Activated CD4-positive, alpha-beta memory T cell treated with anti-CD3 and anti-CD28 coated beads, Interleukin-2, amount 10 ng/mL, durations not matched to agents 7 days and 5 days (primary cell): ENCODE measurements at regions of chr2 and their contacts with region 1.

Region 1: DNA sequence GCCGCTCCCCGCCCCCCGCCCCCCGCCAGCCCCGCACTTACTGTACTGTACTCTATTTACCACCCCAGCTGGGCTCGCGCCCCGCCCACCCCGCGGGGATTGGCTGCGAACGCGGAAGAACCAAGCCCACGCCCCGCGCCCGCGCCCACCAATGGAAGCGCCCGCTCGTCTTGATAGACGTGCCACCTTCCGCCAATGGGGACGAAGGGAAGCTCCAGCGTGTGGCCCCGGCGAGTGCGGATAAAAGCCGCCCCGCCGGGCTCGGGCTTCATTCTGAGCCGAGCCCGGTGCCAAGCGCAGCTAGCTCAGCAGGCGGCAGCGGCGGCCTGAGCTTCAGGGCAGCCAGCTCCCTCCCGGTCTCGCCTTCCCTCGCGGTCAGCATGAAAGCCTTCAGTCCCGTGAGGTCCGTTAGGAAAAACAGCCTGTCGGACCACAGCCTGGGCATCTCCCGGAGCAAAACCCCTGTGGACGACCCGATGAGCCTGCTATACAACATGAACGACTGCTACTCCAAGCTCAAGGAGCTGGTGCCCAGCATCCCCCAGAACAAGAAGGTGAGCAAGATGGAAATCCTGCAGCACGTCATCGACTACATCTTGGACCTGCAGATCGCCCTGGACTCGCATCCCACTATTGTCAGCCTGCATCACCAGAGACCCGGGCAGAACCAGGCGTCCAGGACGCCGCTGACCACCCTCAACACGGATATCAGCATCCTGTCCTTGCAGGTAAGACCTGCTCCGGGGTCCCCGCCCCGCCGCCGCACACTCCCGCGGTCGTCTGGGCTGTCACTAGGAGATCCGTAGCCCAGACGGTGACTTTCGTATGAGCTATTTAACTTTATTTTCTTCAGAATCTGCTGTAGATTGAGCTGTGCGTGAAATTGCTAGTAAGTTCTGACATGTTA is at the start of gene ID2:
- DNase-seq: peak; percentile 99
- H3K4me3 Mint-ChIP-seq: peak within 1 kb of the TSS; percentile 96
- H3K27ac Mint-ChIP-seq: peak within 1 kb of the TSS; percentile 94
- H3K4me1 Mint-ChIP-seq: peaks cover 32% of the 10 kb centered on the region
- H3K27me3 Mint-ChIP-seq: peaks cover 10% of the 10 kb centered on the region
- total RNA-seq, gene ID2: 299 to 324 TPM

Region 2: GRCh38 chr2:7427293-7428060 is 1254.6 kb before region 1 on chr2:
- CTCF ChIA-PET with region 1: interaction called, 12 read pairs
- POLR2A ChIA-PET with region 1: interaction called, 24 read pairs
- DNase-seq: no peak
- H3K4me3 Mint-ChIP-seq: peak overlapping the region; percentile 35
- H3K27ac Mint-ChIP-seq: peak overlapping the region; percentile 59
- H3K4me1 Mint-ChIP-seq: peaks cover 43% of the 10 kb centered on the region
- H3K27me3 Mint-ChIP-seq: peaks cover 5% of the 10 kb centered on the region

Region 3: DNA sequence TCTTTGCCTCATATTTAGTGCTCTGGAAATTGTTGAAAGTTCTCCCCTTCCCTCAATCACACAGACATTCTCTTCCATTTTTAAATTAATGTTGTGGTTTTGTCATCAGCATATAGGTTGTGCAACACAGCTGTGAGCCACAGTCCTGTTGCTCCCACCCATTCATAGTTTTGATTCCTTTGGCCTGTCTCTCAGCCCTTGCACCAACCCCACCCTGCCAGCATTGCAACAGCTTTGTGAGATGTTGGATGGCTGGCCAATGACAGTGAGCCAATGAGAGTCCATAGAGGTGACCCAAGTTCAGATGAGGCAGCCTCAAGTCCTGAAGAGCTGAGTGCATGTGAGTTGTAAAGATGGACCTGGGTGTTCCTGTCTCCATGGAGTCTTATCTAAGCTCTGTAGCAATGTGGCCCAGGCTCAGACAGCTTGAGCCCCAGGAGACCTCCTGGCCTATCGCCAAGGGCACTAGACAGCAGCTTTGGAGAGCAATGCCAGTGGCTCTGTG is 989.3 kb before region 1 on chr2:
- CTCF ChIA-PET with region 1: no interaction called
- POLR2A ChIA-PET with region 1: interaction called, 11 read pairs
- DNase-seq: no peak
- H3K4me3 Mint-ChIP-seq: peak overlapping the region; percentile 52
- H3K27ac Mint-ChIP-seq: peak overlapping the region; percentile 85
- H3K4me1 Mint-ChIP-seq: peaks cover 48% of the 10 kb centered on the region
- H3K27me3 Mint-ChIP-seq: no peaks in the 10 kb centered on the region

Region 4: DNA sequence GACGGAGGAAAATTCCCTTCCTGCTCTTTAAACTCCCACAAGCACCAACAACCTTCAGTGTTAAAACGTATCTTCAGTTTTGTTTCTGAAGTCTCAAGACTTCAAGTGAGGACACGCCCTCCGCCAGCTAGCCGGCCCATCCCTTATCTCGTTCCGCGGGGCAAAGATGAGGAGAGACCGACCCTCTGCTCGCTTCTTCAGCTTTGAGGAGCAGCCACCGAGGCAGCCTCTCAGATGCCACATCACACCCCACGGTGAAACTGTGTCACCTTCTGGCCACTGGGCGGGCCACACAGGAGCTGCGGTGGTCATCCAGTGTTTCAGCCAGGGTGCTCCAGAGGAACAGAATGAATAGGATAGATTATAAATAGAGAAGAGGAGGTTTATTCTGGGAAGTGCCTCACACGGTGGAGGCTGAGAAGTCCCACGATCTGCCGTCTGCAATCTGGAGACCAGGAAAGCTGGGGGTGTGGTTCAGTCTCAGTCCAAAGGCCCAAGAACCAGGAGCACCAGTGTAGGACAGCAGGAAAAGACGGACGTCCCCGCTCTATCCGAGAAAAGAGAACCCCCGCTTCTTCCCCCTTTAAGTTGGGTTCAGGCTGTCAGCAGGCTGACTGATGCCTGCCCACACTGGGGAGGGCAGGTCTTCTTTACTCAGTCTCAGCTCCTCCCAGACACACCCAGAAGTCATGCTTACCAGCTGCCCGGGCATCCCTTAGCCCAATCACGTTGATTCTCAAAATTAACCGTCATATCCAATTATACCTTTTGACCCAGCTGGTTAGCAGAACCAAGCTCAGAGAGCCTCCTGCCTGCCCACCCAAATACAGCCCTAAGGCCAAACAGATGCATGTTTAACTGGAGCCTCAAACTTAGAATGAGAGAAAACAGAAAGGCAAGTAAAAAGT is 399.8 kb before region 1 on chr2:
- CTCF ChIA-PET with region 1: no interaction called
- POLR2A ChIA-PET with region 1: interaction called, 14 read pairs
- DNase-seq: peak; percentile 45
- H3K4me3 Mint-ChIP-seq: peak overlapping the region; percentile 79
- H3K27ac Mint-ChIP-seq: peak overlapping the region; percentile 88
- H3K4me1 Mint-ChIP-seq: peaks cover 55% of the 10 kb centered on the region
- H3K27me3 Mint-ChIP-seq: no peaks in the 10 kb centered on the region

Region 5: GRCh38 chr2:8337321-8337720 is 344.7 kb before region 1 on chr2:
- CTCF ChIA-PET with region 1: no interaction called
- POLR2A ChIA-PET with region 1: interaction called, 21 read pairs
- DNase-seq: peak; percentile 48
- H3K4me3 Mint-ChIP-seq: peak overlapping the region; percentile 25
- H3K27ac Mint-ChIP-seq: peak overlapping the region; percentile 66
- H3K4me1 Mint-ChIP-seq: peaks cover 33% of the 10 kb centered on the region
- H3K27me3 Mint-ChIP-seq: peaks cover 5% of the 10 kb centered on the region

Region 6: DNA sequence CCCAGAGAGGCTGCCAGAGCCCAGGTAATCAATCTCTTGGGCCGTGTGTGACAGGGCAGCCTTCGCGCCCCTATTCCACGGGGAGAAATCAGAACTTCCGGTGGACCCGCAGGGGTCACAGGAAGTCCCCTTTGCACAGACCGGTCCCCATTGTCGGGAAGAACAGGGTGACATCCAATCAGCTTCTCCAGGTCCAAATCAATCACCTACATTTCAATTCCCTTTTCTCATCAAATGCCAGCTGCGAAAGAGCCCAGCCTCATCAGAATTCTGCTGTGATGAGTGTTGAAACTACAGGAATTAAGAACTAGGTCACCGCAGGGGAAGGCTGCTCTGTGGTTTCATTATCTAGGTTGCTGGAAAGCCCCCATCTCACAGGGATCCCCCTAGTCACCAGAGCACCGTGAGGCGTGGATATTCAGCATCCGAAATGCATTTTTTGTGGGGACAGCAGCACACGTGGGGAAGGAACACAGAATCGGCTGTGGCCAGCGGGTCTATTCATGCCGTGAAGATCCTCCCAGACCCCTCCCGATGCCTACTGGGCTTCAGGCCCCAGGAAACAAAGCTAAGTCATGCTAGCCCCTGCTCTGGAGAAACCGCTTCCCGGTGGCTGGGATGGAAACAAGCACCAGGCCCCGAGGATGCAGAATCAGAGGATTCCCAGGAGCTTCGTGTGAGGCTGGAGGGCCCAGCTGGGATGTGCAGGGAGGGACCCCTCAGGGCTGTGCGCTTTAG is 193.9 kb before region 1 on chr2:
- CTCF ChIA-PET with region 1: no interaction called
- POLR2A ChIA-PET with region 1: interaction called, 44 read pairs
- DNase-seq: peak; percentile 70
- H3K4me3 Mint-ChIP-seq: peak overlapping the region; percentile 81
- H3K27ac Mint-ChIP-seq: peak overlapping the region; percentile 84
- H3K4me1 Mint-ChIP-seq: peaks cover 78% of the 10 kb centered on the region
- H3K27me3 Mint-ChIP-seq: no peaks in the 10 kb centered on the region

Region 7: GRCh38 chr2:8544786-8545694 is 137.0 kb before region 1 on chr2:
- CTCF ChIA-PET with region 1: interaction called, 54 read pairs
- POLR2A ChIA-PET with region 1: interaction called, 230 read pairs
- DNase-seq: peak; percentile 93
- H3K4me3 Mint-ChIP-seq: peak overlapping the region; percentile 39
- H3K27ac Mint-ChIP-seq: peak overlapping the region; percentile 100
- H3K4me1 Mint-ChIP-seq: peaks cover 81% of the 10 kb centered on the region
- H3K27me3 Mint-ChIP-seq: no peaks in the 10 kb centered on the region